ENCODE measurements at regions of chr20 and their contacts with region 1.

Region 1: DNA sequence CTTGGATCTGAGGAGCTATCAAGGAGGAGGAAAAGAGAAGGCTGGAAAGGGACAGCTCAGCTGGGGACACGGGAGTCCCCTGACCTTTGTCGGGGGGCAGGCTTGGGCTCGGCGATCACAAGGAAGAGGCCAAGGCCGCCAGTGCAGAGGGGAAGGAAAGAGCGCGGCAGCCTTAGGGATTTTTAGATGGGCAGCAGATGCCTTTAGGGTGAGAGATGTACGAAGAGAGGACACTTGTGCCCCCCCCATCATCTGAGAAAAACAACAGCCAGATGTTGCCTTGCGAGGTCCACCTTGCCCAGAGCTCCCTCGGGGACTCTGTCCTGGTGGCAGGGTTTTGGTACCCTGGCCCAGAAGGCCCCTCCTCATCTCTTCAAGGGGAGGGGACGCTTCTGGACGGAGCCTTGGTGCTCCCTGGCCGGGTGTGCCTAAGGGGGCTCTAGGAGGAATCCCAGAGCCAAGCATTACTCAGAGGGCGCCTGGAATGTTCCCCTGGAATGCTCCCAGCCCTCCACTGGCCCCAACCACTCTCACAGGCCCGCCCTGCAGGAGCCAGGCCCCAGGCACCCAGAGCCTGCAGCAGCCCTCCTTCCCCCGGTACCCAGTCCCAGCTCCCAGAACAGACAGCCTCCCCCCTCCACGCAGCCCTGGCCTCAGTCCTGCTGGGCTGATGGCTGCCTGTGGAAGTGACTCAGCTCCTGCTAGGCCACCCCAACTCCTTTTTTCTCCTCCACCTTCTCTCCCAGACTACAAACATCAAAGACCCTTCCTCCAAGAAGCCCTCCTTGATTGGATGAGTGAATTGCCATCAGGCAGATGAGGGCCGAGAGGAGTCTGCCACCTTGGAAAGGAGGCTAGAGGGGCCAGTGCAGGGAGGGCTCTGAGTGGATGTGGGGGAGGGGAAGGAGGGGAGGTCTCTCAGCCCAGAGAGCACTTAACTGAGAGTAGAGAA is 1.8 kb downstream of the ADAM33 start:
- DNase-seq: no peak
- ATAC-seq: no peak
- H3K4me3 ChIP-seq: no peak overlapping the region
- H3K27ac ChIP-seq: no peak overlapping the region
- H3K4me1 ChIP-seq: no peaks in the 10 kb centered on the region; the same call in 1 of the 2 replicates
- H3K27me3 ChIP-seq: peaks cover 3% of the 10 kb centered on the region in 2 experiments; a peak in 2 of 4 replicates
- CTCF ChIP-seq: no peak
- EP300 ChIP-seq: no peak
- POLR2A ChIP-seq: no peak
- RAD21 ChIP-seq: no peak

Region 2: DNA sequence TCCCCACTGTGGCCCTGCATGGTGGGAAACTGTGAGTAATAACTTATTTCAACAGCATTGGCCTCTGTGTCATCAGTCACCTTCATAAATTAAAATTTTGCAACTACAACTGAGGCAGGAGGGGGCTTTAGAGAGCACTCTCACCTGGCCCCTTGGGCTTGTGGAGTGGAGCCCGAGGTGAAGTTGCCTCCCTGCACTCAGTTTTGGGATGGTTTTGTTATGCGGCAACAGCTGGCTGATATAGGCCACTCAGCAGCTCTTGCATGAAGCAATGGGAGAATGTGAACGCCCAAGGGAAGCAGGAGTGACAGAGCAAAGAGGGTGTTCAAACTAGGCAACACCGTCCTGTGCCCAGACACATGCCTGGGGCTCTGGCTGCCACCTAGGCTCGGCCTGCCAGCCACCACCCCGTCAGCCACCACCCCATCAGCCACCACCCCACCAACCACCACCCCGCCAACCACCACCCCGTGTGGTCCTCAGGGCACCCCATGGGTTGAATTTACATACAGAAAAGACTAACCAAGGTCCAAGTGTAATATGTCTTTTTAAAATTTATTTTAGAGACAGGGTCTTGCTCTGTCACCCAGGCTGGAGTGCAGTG is 12.5 kb before region 1 on chr20:
- CTCF ChIA-PET with region 1: interaction called, 10 read pairs
- POLR2A ChIA-PET with region 1: no interaction called
- RAD21 ChIA-PET with region 1: no interaction called
- SMC1A ChIA-PET with region 1: interaction called, 3 read pairs
- in situ Hi-C with region 1: no loop called
- intact Hi-C with region 1: no loop called
- DNase-seq: no peak
- ATAC-seq: no peak
- H3K4me3 ChIP-seq: no peak overlapping the region
- H3K27ac ChIP-seq: no peak overlapping the region
- H3K4me1 ChIP-seq: peaks cover 16% of the 10 kb centered on the region
- H3K27me3 ChIP-seq: peaks cover 3 to 4% of the 10 kb centered on the region in 2 experiments; a peak in 3 of 4 replicates
- CTCF ChIP-seq: no peak
- EP300 ChIP-seq: no peak
- POLR2A ChIP-seq: no peak
- RAD21 ChIP-seq: no peak